HCT116 (cell line): ENCODE measurements at regions of chr3 and their contacts with region 1.

Region 1: GRCh38 chr3:24483873-24484272 is 10.8 kb downstream of the THRB start:
- DNase-seq: no peak
- ATAC-seq: no peak
- H3K4me3 ChIP-seq: no peak overlapping the region
- H3K27ac ChIP-seq: no peak overlapping the region
- H3K4me1 ChIP-seq: no peaks in the 10 kb centered on the region
- H3K27me3 ChIP-seq: no peaks in the 10 kb centered on the region
- CTCF ChIP-seq: no peak
- POLR2A ChIP-seq: no peak
- RAD21 ChIP-seq: no peak

Region 2: GRCh38 chr3:24496529-24497482 is 12.9 kb after region 1 on chr3:
- CTCF ChIA-PET with region 1: interaction called, 11 read pairs
- POLR2A ChIA-PET with region 1: no interaction called
- RAD21 ChIA-PET with region 1: no interaction called
- intact Hi-C with region 1: no loop called
- DNase-seq: peak; percentile 68
- ATAC-seq: peak; percentile 33
- H3K4me3 ChIP-seq: no peak overlapping the region
- H3K27ac ChIP-seq: no peak overlapping the region
- H3K4me1 ChIP-seq: peaks cover 8 to 26% of the 10 kb centered on the region in 2 experiments; a peak in 3 of 4 replicates
- H3K27me3 ChIP-seq: no peaks in the 10 kb centered on the region; the same call in 1 of the 2 replicates
- CTCF ChIP-seq: peak; percentile 55 to 83 (median 70); a peak in 5 of 6 replicates
- POLR2A ChIP-seq: no peak
- RAD21 ChIP-seq: peak; percentile 49